A549 (cell line): ENCODE measurements at regions of chr2 and their contacts with region 1.

Region 1: GRCh38 chr2:61764035-61764800 is 89.6 kb downstream of the FAM161A start:
- DNase-seq: peak; percentile 92 to 100
- ATAC-seq: peak; percentile 97 to 98
- H3K4me3 ChIP-seq: peak overlapping the region; percentile 51
- H3K27ac ChIP-seq: peak overlapping the region; percentile 85 to 87
- H3K4me1 ChIP-seq: peaks cover 32% of the 10 kb centered on the region
- CTCF ChIP-seq: no peak; the same call in 2 of the 3 replicates
- EP300 ChIP-seq: no peak; a peak in 1 of 5 replicates
- POLR2A ChIP-seq: peak; percentile 63
- RAD21 ChIP-seq: peak in 1 of 2 experiments; percentile 8; a peak in 2 of 5 replicates

Region 2: GRCh38 chr2:61538200-61538919 is 225.9 kb before region 1 on chr2 and contains the start of gene XPO1:
- CTCF ChIA-PET with region 1: no interaction called
- POLR2A ChIA-PET with region 1: interaction called, 32 read pairs
- DNase-seq: peak; percentile 97 to 100
- ATAC-seq: peak; percentile 82 to 92
- H3K4me3 ChIP-seq: peak within 1 kb of the TSS; percentile 83
- H3K27ac ChIP-seq: peak within 1 kb of the TSS; percentile 97 to 98
- H3K4me1 ChIP-seq: peaks cover 30% of the 10 kb centered on the region
- CTCF ChIP-seq: no peak
- EP300 ChIP-seq: peak in 1 of 2 experiments; percentile 13; a peak in 1 of 5 replicates
- POLR2A ChIP-seq: peak; percentile 86
- RAD21 ChIP-seq: no peak
- polyA plus RNA-seq, gene XPO1: 173 and 216 TPM in 2 replicates

Region 3: DNA sequence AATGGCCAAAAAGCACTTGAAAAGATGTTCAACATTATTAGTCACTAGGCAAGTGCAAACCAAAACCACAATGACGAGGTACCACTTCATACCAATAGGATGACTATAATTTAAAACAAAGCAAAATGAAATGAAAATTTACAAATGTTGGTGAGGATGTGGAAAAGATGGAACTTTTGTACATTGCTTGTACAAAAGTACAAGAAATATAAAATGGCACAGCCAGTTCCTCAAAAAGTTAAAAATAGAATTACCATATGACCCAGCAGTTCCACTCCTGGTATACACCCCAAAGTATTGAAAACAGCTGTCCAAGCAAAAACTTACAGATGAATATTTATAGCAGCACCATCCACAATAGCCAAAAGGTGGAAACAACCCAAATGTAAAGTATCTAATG is 118.3 kb before region 1 on chr2:
- CTCF ChIA-PET with region 1: no interaction called
- POLR2A ChIA-PET with region 1: no interaction called
- DNase-seq: no peak
- ATAC-seq: no peak
- H3K4me3 ChIP-seq: no peak overlapping the region
- H3K27ac ChIP-seq: no peak overlapping the region
- H3K4me1 ChIP-seq: no peaks in the 10 kb centered on the region
- CTCF ChIP-seq: no peak
- EP300 ChIP-seq: no peak
- POLR2A ChIP-seq: no peak
- RAD21 ChIP-seq: no peak

Region 4: DNA sequence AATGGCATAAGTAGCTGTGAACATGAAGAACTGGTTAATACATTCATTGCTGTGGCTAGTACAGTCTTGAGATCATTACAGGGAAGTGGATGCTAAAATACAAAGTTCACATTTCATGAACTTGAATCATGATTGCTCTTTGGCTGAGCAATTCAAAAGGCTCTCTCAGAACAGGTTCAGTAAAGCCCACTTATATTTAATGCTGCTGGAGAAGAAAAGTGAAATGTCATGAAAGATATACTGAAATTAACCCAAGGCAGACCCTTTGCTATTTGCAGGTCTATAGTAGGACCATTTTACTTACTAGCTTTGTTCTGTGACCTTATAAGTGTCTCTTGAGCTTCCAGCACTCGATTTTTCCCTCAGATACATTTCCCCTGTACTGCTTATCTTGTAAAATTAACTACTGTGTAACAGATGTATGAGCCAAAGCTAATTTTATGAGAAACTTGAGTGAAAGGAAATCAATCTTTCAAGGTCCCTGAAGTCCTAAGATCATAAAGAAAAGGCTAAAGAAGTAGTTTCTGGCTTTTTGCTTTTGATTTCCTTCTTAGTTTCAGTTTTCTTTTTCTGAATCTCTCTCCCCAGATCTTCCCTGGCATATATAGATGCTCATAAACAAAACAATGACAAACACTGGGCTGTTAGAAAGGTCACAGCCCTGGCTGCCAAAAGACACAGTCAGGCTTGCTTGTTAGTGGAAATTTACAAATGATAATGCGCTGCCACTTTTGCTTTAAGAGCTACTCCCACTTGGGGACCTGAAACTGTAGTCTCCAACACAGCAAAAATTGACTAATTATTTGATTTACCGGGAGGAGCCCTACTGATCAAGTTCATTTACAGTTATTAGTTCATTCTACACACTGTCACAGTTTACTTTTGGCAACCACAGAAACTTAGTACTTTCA is 93.4 kb before region 1 on chr2:
- CTCF ChIA-PET with region 1: no interaction called
- POLR2A ChIA-PET with region 1: interaction called, 23 read pairs
- DNase-seq: peak; percentile 42 to 72
- ATAC-seq: peak; percentile 85
- H3K4me3 ChIP-seq: peak overlapping the region; percentile 30
- H3K27ac ChIP-seq: peak overlapping the region; percentile 80 to 81
- H3K4me1 ChIP-seq: peaks cover 23% of the 10 kb centered on the region
- CTCF ChIP-seq: no peak
- EP300 ChIP-seq: no peak
- POLR2A ChIP-seq: no peak
- RAD21 ChIP-seq: no peak

Region 5: GRCh38 chr2:61792355-61792890 is 28.2 kb after region 1 on chr2:
- CTCF ChIA-PET with region 1: interaction called, 5 read pairs
- POLR2A ChIA-PET with region 1: interaction called, 12 read pairs
- DNase-seq: no peak
- ATAC-seq: no peak
- H3K4me3 ChIP-seq: no peak overlapping the region
- H3K27ac ChIP-seq: peak overlapping the region in 1 of 2 experiments; percentile 10; a peak in 1 of 6 replicates
- H3K4me1 ChIP-seq: no peaks in the 10 kb centered on the region
- CTCF ChIP-seq: no peak
- EP300 ChIP-seq: no peak
- POLR2A ChIP-seq: no peak
- RAD21 ChIP-seq: no peak

Region 6: GRCh38 chr2:61854474-61855182 is 90.4 kb after region 1 on chr2:
- CTCF ChIA-PET with region 1: no interaction called
- POLR2A ChIA-PET with region 1: interaction called, 35 read pairs
- DNase-seq: peak; percentile 97 to 99
- ATAC-seq: peak; percentile 87 to 93
- H3K4me3 ChIP-seq: peak overlapping the region; percentile 63
- H3K27ac ChIP-seq: peak overlapping the region; percentile 94
- H3K4me1 ChIP-seq: peaks cover 6% of the 10 kb centered on the region; the same call in 1 of the 3 replicates
- CTCF ChIP-seq: no peak
- EP300 ChIP-seq: no peak
- POLR2A ChIP-seq: peak; percentile 40
- RAD21 ChIP-seq: no peak